ENCODE measurements at regions of chr17 and their contacts with region 1.

Region 1: DNA sequence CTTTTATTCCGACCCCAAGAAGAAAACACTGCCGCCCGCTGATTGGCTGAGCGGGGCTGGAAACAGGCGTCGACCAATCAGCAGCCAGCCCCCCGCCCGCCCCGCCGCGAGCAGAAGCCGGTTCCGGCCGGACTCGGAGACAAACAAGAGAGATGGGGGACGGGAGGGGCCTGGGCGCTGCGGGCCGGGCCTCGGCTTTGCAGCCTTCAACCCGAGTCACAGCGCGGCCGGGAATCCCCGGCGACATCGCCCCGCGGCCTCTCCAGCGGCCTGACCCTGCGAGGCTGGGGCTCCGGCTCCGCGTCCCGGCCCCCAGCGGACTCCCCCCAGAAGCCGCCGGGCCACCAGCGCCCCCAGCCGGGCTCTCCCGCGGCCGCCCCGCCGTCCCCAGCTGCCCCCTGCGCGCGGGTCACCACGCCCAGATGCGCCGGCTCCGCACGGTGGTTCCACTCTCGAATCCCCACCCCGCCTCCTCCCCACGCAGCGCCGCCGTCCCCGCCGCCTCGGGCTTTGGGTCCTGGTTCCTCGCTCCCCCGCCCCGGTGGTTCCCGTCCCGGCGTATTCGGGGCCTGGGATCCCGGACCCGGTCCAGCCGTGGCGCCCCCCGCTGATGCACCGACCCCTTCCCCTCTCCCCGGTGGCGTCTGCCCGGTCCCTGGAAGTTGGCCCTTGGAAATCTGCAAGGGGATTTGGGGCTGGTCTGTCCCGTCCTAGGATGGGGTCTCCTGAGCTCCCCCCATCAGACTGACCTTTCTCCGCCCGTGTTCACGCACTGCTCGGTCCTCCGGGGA is 417 bp upstream of the SLC43A2 start:
- DNase-seq: peak; percentile 94
- H3K4me3 ChIP-seq: peak overlapping the region; percentile 47 to 83
- H3K27ac ChIP-seq: peak overlapping the region; percentile 78 to 94
- H3K4me1 ChIP-seq: peaks cover 8% of the 10 kb centered on the region
- H3K27me3 ChIP-seq: no peaks in the 10 kb centered on the region
- CTCF ChIP-seq: peak; percentile 27 to 72 (median 48)
- POLR2A ChIP-seq: peak; percentile 74

Region 2: DNA sequence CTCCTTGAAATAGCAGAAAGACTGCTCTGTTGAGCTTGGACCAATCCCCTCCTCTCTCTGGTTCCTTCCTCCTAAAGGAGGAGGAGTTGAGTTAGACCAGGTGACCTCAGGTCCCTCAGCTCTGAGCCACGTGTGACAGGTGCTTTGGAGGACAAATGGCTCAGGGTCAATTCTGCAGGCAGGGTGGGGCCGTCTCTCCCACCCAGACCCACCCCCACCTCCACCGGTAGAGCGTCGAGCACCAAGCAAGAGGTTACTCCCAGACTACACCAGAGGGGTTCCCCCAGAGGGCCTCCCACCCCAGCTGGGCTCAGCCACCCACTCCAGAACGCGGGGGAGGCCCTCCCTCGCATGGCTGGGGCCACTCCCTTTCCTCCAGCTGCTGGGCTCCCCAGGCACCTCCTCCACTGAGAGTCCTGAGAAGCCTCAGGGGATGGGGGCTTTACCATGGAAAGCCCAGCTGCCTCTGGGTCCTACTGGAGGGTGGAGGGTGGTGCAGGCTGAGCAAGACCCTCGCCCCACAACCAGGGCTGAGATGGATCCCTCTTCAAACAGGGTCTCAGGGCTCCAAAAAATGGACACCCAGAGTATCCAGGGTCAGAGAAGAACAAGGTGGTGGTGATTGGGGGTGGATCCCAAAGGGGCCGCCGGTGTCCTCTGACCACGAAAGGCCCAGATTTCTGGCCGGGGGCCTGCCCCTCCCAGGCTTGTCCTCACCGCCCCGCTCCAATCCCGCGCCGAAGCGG is 144.2 kb before region 1 on chr17:
- intact Hi-C with region 1: no loop called
- DNase-seq: no peak
- H3K4me3 ChIP-seq: peak overlapping the region; percentile 76 to 78
- H3K27ac ChIP-seq: peak overlapping the region; percentile 98 to 99
- H3K4me1 ChIP-seq: peaks cover 14% of the 10 kb centered on the region
- H3K27me3 ChIP-seq: no peaks in the 10 kb centered on the region
- CTCF ChIP-seq: no peak
- POLR2A ChIP-seq: peak; percentile 10

Region 3: DNA sequence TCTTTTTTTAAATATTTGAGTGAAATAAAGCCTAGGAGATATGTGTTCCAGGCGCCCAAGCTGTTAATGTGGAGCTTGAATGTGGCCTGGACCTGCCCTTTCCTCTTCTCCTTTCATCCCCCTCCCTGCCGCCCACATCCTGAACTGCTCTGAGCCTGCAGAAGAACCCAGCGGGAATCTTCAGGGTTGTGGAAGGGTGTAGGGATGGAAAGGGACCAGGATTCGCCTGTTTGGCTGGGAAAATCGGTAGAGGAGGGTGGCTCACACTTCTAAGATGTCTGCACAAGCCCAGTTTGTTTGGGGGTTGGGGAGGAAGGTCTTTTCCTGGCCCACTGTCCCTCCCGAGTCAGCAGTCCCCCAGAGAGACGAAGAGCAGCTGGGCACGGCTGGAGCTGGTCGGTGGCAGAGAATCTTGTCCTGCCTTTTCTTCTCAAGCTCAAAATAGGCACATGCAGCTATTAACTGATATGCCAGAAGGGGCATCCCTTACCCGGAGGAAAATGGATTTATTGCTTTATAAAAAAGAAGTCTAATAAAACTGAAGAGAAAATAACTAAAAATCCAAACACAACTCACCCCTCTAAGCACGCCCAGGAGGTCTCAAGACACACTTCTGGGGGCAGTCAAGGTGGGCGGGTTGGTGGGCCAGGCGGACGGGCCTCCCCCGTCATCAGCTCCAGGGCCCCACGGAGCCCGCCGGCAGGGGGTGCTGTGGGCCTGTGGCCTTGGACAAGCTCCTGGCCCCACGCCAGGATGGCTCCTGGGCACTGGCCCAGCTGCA is 54.9 kb before region 1 on chr17:
- intact Hi-C with region 1: loop called (anchors 1 kb)
- DNase-seq: peak; percentile 81
- H3K4me3 ChIP-seq: no peak overlapping the region
- H3K27ac ChIP-seq: peak overlapping the region; percentile 74 to 81
- H3K4me1 ChIP-seq: peaks cover 15% of the 10 kb centered on the region
- H3K27me3 ChIP-seq: no peaks in the 10 kb centered on the region
- CTCF ChIP-seq: peak; percentile 91 to 99 (median 98)
- POLR2A ChIP-seq: no peak

Region 4: DNA sequence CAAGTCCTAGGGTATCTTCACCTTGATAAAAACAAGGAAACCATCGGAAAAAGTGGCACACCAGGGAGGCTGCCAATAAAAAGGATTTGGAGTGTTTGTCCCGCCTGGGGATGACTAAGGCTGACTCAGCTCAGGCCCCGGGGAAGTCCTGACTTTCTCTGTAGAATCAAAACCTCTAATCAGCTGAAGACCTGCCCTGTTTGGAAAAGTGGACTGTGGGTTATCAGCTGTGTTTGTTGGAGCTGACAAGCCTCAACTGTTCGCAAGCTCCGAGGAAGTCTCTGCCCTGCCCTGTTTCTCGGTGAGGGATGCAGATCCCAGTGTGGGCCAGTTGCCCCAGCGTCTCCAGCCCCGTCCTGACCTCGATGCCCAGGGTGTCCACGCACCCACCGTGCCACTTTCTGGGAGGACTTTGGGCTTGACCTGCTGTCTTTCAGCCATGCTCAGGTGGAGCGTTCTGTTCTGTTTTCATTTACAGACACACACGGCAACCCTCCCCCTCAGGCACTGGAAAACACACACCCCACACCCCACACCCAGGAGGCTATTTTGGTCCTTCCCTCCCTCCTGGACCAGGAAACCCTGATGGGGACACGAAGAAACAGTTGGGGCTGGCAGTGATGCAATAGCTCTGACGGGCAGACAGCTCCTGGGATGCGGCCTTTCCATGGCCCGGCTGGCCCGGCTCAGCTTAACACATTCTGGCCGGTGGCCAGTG is 38.9 kb before region 1 on chr17:
- intact Hi-C with region 1: loop called (anchors 5 kb)
- DNase-seq: no peak
- H3K4me3 ChIP-seq: no peak overlapping the region
- H3K27ac ChIP-seq: peak overlapping the region in 1 of 2 donors; percentile 44
- H3K4me1 ChIP-seq: no peaks in the 10 kb centered on the region
- H3K27me3 ChIP-seq: no peaks in the 10 kb centered on the region
- CTCF ChIP-seq: no peak
- POLR2A ChIP-seq: no peak

Region 5: DNA sequence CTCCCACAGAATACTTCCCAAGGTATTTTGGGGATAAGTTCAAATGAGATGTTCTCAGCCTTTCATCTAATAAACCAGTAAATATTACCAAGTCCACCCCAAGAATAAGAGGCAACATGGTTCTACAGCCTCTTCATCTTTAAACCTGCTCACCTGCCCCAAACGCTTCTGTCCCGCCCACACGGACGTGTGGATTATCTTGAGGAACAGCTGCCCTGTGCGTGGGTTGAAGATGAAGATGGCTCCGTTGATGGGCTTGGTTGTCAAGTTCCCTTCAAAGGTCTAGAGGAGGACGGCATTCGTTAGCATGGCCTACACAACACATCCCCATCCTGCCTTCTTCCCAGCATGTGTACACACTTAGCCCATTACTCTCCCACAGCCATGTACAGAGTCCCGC is 29.0 kb after region 1 on chr17:
- intact Hi-C with region 1: no loop called
- DNase-seq: no peak
- H3K4me3 ChIP-seq: no peak overlapping the region
- H3K27ac ChIP-seq: no peak overlapping the region
- H3K4me1 ChIP-seq: no peaks in the 10 kb centered on the region
- H3K27me3 ChIP-seq: no peaks in the 10 kb centered on the region
- CTCF ChIP-seq: no peak
- POLR2A ChIP-seq: no peak

Region 6: GRCh38 chr17:1752425-1753262 is 123.6 kb after region 1 on chr17:
- intact Hi-C with region 1: no loop called
- DNase-seq: no peak
- H3K4me3 ChIP-seq: peak overlapping the region in 1 of 2 donors; percentile 8
- H3K27ac ChIP-seq: peak overlapping the region; percentile 62 to 70
- H3K4me1 ChIP-seq: no peaks in the 10 kb centered on the region
- H3K27me3 ChIP-seq: no peaks in the 10 kb centered on the region
- CTCF ChIP-seq: peak in 1 of 4 experiments; percentile 17
- POLR2A ChIP-seq: peak; percentile 10